ENCODE measurements at regions of chr17 and their contacts with region 1.

Region 1: DNA sequence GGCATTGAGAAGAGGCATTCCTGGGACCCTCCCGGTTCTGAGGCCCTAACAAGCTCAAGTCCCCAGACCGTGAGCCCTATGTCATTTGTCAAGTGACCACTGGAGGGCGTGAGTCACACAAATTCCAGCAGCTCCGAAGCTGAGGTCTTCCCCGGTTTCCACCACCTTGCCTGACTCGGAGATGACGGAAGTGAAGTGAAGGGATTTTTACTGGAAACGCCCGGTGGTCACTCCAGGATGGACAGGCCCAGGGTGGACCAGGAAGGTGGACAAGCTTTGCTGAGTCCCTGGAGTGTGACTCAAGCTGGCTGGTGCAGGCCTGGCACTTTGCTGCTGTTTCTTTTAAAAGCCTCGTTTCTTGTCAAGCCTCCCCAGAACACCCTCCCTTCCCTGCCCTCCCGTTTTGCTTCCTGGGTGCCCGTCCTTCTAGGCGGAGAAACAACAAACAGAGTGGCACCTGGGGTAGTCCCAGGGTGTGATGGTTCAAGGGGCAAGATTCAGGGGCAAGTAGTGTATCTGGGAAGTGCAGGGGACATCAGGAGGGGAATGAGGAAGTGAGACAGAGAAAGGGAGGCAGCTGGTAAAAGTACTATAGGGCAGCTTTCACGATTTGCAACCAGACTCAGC is 5.3 kb upstream of the NOS2 start:
- DNase-seq: peak; percentile 97
- H3K4me3 ChIP-seq: peak overlapping the region; percentile 19
- H3K4me3 Mint-ChIP-seq: peak overlapping the region; percentile 65
- H3K27ac Mint-ChIP-seq: peak overlapping the region; percentile 95
- H3K4me1 ChIP-seq: peaks cover 52% of the 10 kb centered on the region
- H3K4me1 Mint-ChIP-seq: peaks cover 41% of the 10 kb centered on the region
- H3K27me3 ChIP-seq: no peaks in the 10 kb centered on the region
- H3K27me3 Mint-ChIP-seq: no peaks in the 10 kb centered on the region
- CTCF ChIP-seq: peak; percentile 99

Region 2: GRCh38 chr17:27760069-27760885 is 45.4 kb before region 1 on chr17:
- CTCF ChIA-PET with region 1: interaction called, 27 read pairs
- POLR2A ChIA-PET with region 1: no interaction called
- intact Hi-C with region 1: loop called (anchors 1 kb)
- DNase-seq: peak; percentile 85 to 92
- H3K4me3 ChIP-seq: no peak overlapping the region
- H3K4me3 Mint-ChIP-seq: no peak overlapping the region
- H3K27ac Mint-ChIP-seq: no peak overlapping the region
- H3K4me1 ChIP-seq: no peaks in the 10 kb centered on the region
- H3K4me1 Mint-ChIP-seq: no peaks in the 10 kb centered on the region
- H3K27me3 ChIP-seq: no peaks in the 10 kb centered on the region
- H3K27me3 Mint-ChIP-seq: no peaks in the 10 kb centered on the region
- CTCF ChIP-seq: peak; percentile 97 to 100

Region 3: GRCh38 chr17:27818401-27819105 is 12.9 kb after region 1 on chr17:
- CTCF ChIA-PET with region 1: interaction called, 19 read pairs
- POLR2A ChIA-PET with region 1: no interaction called
- intact Hi-C with region 1: no loop called
- DNase-seq: no peak
- H3K4me3 ChIP-seq: no peak overlapping the region
- H3K4me3 Mint-ChIP-seq: no peak overlapping the region
- H3K27ac Mint-ChIP-seq: no peak overlapping the region
- H3K4me1 ChIP-seq: no peaks in the 10 kb centered on the region
- H3K4me1 Mint-ChIP-seq: peaks cover 13% of the 10 kb centered on the region
- H3K27me3 ChIP-seq: no peaks in the 10 kb centered on the region
- H3K27me3 Mint-ChIP-seq: no peaks in the 10 kb centered on the region
- CTCF ChIP-seq: no peak

Region 4: GRCh38 chr17:27845264-27846041 is 39.8 kb after region 1 on chr17:
- CTCF ChIA-PET with region 1: interaction called, 9 read pairs
- POLR2A ChIA-PET with region 1: no interaction called
- intact Hi-C with region 1: loop called (anchors 1 kb)
- DNase-seq: peak; percentile 87 to 94
- H3K4me3 ChIP-seq: no peak overlapping the region
- H3K4me3 Mint-ChIP-seq: peak overlapping the region; percentile 58
- H3K27ac Mint-ChIP-seq: peak overlapping the region; percentile 93
- H3K4me1 ChIP-seq: peaks cover 28% of the 10 kb centered on the region
- H3K4me1 Mint-ChIP-seq: peaks cover 18% of the 10 kb centered on the region
- H3K27me3 ChIP-seq: no peaks in the 10 kb centered on the region
- H3K27me3 Mint-ChIP-seq: no peaks in the 10 kb centered on the region
- CTCF ChIP-seq: no peak

Region 5: DNA sequence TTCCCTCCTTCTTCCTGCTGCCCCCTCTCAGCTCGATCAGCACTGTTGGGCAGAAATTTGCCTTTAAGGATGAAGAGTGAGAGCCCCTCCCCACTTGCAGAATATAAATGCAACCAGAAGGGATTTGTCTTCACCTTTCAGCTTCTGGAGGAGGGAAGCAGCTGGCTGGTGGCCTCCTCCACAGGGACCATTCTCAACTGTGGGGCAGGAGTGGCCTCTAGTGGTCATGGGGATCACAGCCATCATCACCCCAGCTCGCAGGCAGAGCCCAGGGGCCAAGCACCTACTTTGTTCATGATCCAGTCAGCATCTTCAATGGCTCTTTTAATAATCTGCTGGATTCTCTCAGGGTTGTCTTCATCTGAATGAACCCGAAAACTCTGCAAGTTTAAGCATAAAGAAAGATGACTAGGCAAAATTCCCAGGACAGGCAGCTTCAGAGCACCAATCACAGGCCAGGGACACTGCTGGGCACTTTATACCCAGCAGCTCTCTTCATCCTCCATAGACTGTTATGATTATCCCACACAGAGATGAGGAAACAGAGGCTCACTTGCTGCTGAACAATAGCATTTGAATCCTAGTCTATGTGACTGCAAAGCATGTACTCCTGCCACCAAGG is 74.5 kb after region 1 on chr17:
- CTCF ChIA-PET with region 1: interaction called, 540 read pairs
- POLR2A ChIA-PET with region 1: interaction called, 10 read pairs
- intact Hi-C with region 1: loop called (anchors 1 kb)
- DNase-seq: peak; percentile 89 to 95
- H3K4me3 ChIP-seq: no peak overlapping the region
- H3K4me3 Mint-ChIP-seq: no peak overlapping the region
- H3K27ac Mint-ChIP-seq: peak overlapping the region; percentile 10
- H3K4me1 ChIP-seq: no peaks in the 10 kb centered on the region
- H3K4me1 Mint-ChIP-seq: peaks cover 10% of the 10 kb centered on the region
- H3K27me3 ChIP-seq: no peaks in the 10 kb centered on the region
- H3K27me3 Mint-ChIP-seq: no peaks in the 10 kb centered on the region
- CTCF ChIP-seq: peak; percentile 99 to 100

Measured in Caco-2 (cell line).